Vagina (tissue), 2 donors: ENCODE measurements at regions of chr17 and their contacts with region 1.

Region 1: GRCh38 chr17:35448214-35448898 is at the start of gene SLFN13:
- DNase-seq: no peak
- H3K4me3 ChIP-seq: peak within 1 kb of the TSS; percentile 57 to 71
- H3K27ac ChIP-seq: peak within 1 kb of the TSS; percentile 43
- H3K4me1 ChIP-seq: peaks cover 20% of the 10 kb centered on the region
- H3K27me3 ChIP-seq: no peaks in the 10 kb centered on the region
- CTCF ChIP-seq: no peak
- POLR2A ChIP-seq: no peak
- total RNA-seq, gene SLFN13: 6.9 TPM

Region 2: DNA sequence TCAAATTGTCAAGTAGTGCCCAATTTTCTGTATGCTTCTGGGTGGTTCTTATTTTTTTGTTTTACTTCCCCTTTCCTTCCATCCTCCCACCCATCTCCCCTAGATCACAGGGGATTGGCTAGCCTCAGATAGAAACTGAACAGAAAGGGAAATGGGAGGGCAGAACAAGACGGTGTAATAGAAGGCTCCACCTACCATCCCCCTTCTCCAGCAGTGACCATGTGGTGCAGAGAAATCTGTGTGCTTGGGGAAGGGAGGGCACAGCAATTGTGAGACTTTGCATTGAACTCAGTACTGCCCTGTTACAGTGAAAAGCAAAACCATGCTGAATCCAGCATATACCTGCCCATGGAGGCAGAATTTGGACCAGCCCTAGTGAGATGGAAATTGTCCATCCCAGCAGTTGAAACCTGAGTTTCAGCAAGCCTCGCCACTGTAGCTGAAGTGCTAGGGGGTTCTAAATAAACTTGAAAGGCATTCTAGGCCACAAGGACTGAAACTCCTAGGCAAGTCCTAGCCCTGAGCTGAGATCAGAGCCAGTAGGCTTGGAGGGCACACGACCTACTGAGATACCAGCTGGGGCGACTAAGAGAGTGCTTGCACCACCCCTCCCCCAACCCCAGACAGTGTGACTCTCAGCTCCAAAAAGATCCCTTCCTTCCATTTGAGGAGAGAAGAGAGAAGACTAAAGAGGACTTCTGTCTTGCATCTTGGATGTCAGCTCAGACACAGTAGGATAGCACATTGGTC is 80.1 kb before region 1 on chr17:
- intact Hi-C with region 1: loop called (anchors 10 kb)
- DNase-seq: no peak
- H3K4me3 ChIP-seq: no peak overlapping the region
- H3K27ac ChIP-seq: no peak overlapping the region
- H3K4me1 ChIP-seq: peaks cover 17% of the 10 kb centered on the region
- H3K27me3 ChIP-seq: no peaks in the 10 kb centered on the region
- CTCF ChIP-seq: no peak
- POLR2A ChIP-seq: no peak